ENCODE measurements at regions of chr15 and their contacts with region 1.

Region 1: DNA sequence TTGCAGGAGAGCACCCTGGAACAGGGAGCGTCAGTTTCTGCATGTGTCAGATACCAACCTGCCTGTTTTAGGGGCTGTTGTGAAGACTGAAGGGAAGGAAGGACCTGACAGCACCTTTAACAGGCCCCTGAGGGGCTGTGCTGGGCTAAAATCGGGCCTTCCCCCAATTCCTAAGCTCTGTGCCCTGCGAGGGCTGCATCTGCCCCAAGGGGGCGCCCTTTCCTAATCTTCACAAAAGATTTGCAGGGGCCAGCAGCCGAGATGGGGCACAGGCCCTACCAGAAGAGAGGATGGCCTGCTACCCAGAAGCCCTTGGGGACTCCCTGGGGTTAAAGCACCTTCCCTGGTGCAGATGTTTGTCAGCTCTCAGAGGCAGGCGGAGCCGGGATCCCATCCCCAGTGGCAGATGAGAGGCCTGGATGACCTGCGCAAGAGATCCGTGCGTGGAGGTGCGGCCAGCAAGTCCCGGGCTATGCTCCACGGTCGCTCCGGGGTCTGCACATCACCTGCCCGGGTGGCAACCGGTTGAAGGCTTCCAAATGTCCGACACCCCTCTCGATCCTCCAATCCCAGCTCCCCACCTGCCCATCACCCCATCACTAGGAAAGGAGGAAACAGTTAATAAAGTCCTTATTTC is 53.6 kb downstream of the RHCG start:
- DNase-seq: peak; percentile 94
- ATAC-seq: peak; percentile 82
- H3K4me3 Mint-ChIP-seq: no peak overlapping the region
- H3K27ac Mint-ChIP-seq: no peak overlapping the region
- H3K4me1 Mint-ChIP-seq: peaks cover 29% of the 10 kb centered on the region
- H3K27me3 Mint-ChIP-seq: peaks cover 26% of the 10 kb centered on the region
- CTCF ChIP-seq: peak; percentile 91

Region 2: DNA sequence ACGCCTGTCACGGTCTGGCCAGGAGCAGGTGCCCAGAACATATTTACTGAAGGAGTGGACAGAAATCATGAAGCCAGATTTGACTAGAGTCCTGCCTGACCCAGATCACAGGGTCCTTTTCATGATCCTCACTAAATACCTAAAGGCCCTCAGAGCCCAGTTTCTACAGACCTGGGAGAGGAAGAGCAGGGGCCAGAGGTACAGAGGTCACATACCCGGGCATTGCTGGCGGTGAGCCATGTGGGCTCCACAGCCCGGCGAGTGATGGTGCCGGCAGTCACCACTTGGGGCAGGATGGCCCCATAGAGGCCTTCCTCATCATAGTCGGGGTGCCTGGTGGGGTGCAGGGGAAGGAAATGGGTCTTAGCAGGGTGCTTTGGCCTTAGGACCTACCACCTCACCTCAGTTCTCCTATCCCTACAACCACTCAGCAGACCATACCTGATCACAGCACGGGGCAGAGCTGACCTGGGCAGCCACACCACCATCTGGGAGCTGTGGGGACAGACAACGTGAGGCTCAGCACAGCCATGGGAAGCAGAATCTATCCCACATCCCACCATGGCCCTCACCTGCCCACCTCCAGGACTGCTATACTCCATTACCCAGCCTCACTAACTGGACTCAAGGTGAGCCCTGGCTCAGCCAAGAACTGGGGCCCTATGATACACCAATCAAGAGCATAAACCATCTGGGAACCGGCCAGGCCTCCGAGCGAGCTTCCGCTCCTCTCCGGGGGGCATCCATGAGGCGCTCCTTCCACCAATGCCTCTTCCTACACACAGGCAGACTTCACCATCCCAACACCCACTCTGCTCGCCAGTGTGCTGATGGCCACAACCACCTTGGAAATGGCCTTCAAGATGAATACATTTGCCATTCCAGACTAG is 121.0 kb before region 1 on chr15:
- CTCF ChIA-PET with region 1: no interaction called
- POLR2A ChIA-PET with region 1: no interaction called
- DNase-seq: no peak
- ATAC-seq: peak; percentile 68
- H3K4me3 Mint-ChIP-seq: no peak overlapping the region
- H3K27ac Mint-ChIP-seq: no peak overlapping the region
- H3K4me1 Mint-ChIP-seq: no peaks in the 10 kb centered on the region
- H3K27me3 Mint-ChIP-seq: no peaks in the 10 kb centered on the region
- CTCF ChIP-seq: no peak

Region 3: GRCh38 chr15:89346516-89347231 is 96.1 kb before region 1 on chr15:
- CTCF ChIA-PET with region 1: interaction called, 18 read pairs
- POLR2A ChIA-PET with region 1: no interaction called
- DNase-seq: peak; percentile 43
- ATAC-seq: peak; percentile 98
- H3K4me3 Mint-ChIP-seq: no peak overlapping the region
- H3K27ac Mint-ChIP-seq: no peak overlapping the region
- H3K4me1 Mint-ChIP-seq: peaks cover 5% of the 10 kb centered on the region; the same call in 1 of the 2 replicates
- H3K27me3 Mint-ChIP-seq: peaks cover 6% of the 10 kb centered on the region; the same call in 1 of the 2 replicates
- CTCF ChIP-seq: no peak

Region 4: DNA sequence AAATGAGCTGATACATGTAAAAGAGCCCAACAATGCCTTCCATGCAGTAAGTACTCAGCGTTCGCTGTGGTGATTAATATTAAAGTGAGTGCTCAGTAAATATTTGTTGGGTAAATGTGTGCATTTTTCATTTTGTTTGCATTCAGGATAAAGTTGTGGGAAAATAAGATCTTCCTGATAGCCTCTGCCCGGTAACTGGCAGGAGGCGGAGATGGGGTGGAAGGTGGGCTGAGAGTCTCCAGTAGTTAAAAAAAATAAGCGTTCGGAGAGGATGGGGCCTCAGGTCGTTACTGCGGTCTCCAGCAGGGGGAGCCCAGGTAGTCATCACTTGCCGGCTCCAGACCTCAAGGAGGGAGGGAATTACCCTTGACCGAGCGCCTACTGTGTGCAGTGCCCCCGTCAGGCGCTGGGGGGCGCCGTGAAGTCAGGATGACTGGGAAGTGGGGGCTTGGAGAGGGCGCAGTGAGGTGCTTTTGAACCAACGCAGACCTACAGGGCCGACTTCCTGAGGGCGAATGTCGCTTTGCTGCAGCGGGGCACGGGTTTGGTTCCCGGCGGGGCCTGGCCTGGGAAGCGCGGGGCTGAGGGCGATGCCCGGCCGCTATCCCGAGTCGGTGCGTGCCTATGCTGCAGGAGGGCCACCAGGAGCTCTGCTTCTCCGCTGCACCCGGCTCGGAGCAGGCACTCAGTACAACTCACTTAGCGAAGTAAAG is 26.5 kb before region 1 on chr15:
- CTCF ChIA-PET with region 1: interaction called, 96 read pairs
- POLR2A ChIA-PET with region 1: no interaction called
- DNase-seq: peak; percentile 99
- ATAC-seq: peak; percentile 80
- H3K4me3 Mint-ChIP-seq: peak overlapping the region; percentile 43
- H3K27ac Mint-ChIP-seq: no peak overlapping the region
- H3K4me1 Mint-ChIP-seq: peaks cover 27% of the 10 kb centered on the region
- H3K27me3 Mint-ChIP-seq: peaks cover 99% of the 10 kb centered on the region
- CTCF ChIP-seq: peak; percentile 99

Region 5: DNA sequence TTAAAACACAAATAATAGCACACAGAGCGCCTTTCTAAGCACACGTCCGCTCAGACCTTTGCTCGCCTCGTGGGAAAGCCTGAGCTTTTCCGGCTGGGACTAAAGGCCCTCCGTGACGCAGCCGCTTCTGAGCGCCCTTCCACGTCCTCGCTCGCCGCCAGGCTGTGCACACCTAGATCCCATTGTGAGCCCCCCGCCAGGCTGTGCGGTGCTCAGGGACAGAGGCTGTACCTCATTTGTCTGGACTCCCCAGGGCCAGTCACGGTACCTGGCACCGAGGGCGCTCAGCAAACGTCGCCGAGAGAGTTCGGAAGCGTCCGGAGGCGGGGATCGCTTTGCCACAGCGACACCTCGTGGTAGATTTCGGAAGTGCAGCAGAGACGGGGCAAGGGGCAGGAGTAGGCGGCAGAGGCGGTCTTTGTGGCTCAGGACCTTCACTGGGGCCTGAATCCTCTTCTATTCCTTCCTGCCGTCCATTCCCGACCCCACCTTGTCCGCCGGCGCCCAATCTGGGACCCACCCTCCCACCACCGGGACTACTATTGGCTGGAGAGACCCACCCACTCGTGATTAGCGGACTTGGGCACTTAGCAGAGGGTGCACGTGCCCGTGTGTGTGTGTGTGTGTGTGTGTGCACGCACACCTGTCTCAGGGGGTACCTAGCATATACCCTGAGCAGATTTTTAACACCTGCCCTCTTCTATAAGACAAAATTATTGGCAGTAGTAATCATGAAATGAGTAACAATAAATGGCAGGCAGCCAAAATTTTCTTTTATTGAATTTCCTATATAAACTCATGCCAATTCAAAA is 12.1 kb before region 1 on chr15:
- CTCF ChIA-PET with region 1: interaction called, 46 read pairs
- POLR2A ChIA-PET with region 1: no interaction called
- DNase-seq: peak; percentile 96
- ATAC-seq: peak; percentile 95
- H3K4me3 Mint-ChIP-seq: peak overlapping the region; percentile 72
- H3K27ac Mint-ChIP-seq: no peak overlapping the region
- H3K4me1 Mint-ChIP-seq: peaks cover 15% of the 10 kb centered on the region
- H3K27me3 Mint-ChIP-seq: peaks cover 32% of the 10 kb centered on the region
- CTCF ChIP-seq: peak; percentile 100

Region 6: DNA sequence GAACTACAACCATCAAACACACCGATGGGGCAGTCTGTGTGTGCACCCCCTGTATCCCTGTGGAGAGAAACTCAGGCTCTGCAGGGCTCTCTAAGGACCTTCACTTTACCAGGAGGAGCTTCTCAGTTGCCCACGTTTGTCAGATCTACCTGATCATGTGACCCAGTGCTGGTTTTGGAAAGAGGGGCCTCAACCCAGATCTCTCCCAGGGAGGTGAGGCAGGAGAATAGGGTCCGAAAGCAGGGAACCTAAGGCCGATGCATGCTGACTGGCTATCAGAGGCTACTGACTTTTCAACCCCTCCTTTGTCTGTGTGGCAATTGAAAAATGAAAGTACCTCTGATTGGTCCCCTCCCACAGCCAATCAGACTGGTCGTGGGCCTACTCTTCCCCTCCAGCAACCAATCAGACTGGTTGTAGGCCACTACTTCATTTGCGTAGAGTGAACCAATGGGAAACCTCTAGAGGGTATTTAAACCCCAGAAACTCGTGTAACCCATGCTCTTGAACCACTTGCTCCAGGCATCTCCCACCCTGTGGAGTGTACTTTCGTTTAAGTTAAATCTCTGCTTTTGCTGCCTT is 19.6 kb after region 1 on chr15:
- CTCF ChIA-PET with region 1: interaction called, 42 read pairs
- POLR2A ChIA-PET with region 1: no interaction called
- DNase-seq: no peak
- ATAC-seq: peak; percentile 80
- H3K4me3 Mint-ChIP-seq: no peak overlapping the region
- H3K27ac Mint-ChIP-seq: no peak overlapping the region
- H3K4me1 Mint-ChIP-seq: peaks cover 18% of the 10 kb centered on the region
- H3K27me3 Mint-ChIP-seq: peaks cover 57% of the 10 kb centered on the region
- CTCF ChIP-seq: no peak

Region 7: DNA sequence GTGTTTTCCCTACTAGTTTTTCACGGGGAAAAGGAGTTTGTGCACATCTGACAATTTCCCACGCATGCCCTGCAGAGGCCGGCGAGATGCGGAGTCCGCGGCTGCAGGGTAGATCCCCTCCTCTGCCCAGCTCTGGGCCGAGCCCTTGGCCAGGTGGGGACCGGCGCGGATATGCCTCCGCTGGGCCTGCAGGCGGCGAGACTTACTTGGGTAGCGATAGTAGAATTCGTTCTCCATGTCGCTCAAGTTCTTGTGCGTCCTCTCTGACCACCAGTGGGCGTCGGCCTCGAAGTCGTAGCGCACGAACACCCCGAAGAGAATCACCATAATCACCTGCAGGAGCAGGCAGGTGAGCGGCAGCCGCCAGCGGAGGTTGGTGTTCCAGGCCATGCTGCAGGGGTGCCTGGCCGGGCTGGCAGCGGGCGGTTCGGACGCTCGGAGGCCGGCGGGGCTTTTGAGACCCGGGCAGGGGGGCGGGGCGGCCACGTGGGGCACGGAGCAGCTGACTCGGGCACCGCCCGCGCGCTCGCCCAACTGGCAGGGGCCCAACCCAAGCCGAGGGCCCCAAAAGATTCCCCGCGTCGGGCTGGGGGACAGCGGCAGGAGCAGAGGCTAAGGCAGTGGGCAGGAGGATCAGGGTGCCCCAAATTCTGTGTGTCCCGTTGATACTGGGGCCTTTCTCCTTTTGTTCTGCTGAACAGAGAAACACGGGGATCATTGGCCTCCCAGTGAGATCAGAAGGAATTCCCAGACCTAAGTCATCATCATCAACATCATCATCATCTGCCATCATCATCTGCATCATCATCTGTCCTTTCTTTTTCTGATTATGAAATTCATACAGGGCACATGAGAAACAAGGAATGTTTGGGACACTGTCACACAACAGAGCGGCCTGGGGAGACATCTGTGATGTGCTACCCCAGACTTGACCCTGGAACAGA is 53.6 kb after region 1 on chr15 and contains the start of gene RHCG:
- CTCF ChIA-PET with region 1: interaction called, 60 read pairs
- POLR2A ChIA-PET with region 1: interaction called, 3 read pairs
- DNase-seq: peak; percentile 84
- ATAC-seq: peak; percentile 91
- H3K4me3 Mint-ChIP-seq: peak within 1 kb of the TSS; percentile 67
- H3K27ac Mint-ChIP-seq: no peak within 1 kb of the TSS
- H3K4me1 Mint-ChIP-seq: 0 out of 2 replicates have a peak, but pooled peaks cover 3% of the 10 kb centered on the region
- H3K27me3 Mint-ChIP-seq: peaks cover 38% of the 10 kb centered on the region
- CTCF ChIP-seq: no peak
- total RNA-seq, gene RHCG: 0.23 to 0.37 TPM (median 0.31 TPM) in 3 replicates

Region 8: GRCh38 chr15:89521605-89522004 is 78.8 kb after region 1 on chr15:
- CTCF ChIA-PET with region 1: no interaction called
- POLR2A ChIA-PET with region 1: no interaction called
- DNase-seq: no peak
- ATAC-seq: no peak
- H3K4me3 Mint-ChIP-seq: no peak overlapping the region
- H3K27ac Mint-ChIP-seq: no peak overlapping the region
- H3K4me1 Mint-ChIP-seq: no peaks in the 10 kb centered on the region
- H3K27me3 Mint-ChIP-seq: 0 out of 2 replicates have a peak, but pooled peaks cover 4% of the 10 kb centered on the region
- CTCF ChIP-seq: no peak

Measured in WTC11 (cell line).